ENCODE measurements at regions of chr10 and their contacts with region 1.

Region 1: DNA sequence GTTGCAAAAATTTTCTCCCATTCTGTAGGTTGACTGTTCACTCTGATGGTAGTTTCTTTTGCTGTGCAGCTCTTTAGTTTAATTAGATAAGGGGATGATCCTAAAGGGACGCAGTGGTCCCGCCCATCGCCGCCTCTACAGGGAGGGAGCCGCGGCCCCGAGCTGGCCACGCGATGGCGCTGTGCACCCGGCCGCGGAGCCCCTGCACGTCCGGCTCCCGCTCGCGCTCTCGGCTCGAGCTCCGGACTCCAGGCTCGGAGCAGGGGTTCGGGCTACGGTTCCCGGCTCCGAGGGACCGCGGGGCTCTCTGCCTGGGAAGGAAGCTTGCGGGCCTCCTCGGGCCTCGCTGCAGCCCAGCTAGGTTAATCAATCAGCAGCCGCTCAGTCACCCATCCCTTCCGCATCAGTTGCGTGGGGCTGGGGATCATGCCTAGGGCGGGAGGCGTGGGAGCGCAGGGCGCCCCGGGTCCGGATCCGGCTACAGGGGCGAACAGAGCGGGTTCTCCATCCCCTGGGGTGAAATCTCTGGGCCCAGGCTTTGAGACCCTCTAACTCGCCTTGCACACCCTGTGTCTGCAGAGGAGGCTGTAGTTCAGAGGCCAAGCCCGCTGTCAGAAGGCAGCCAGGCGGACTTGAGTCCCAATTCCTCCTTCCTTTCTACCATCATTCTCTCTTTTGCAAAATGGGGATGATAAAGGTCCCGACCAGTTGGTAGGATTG is 97.9 kb downstream of the WDR11 start:
- DNase-seq: no peak
- H3K4me3 ChIP-seq: peak overlapping the region; percentile 49
- CTCF ChIP-seq: peak; percentile 90

Region 2: GRCh38 chr10:121088524-121088923 is 139.5 kb after region 1 on chr10:
- CTCF ChIA-PET with region 1: no interaction called
- POLR2A ChIA-PET with region 1: no interaction called
- DNase-seq: no peak
- H3K4me3 ChIP-seq: no peak overlapping the region
- CTCF ChIP-seq: no peak

Region 3: GRCh38 chr10:121608469-121609190 is 659.6 kb after region 1 on chr10:
- CTCF ChIA-PET with region 1: interaction called, 17 read pairs
- POLR2A ChIA-PET with region 1: no interaction called
- DNase-seq: no peak
- H3K4me3 ChIP-seq: peak overlapping the region; percentile 40
- CTCF ChIP-seq: peak; percentile 63

Region 4: DNA sequence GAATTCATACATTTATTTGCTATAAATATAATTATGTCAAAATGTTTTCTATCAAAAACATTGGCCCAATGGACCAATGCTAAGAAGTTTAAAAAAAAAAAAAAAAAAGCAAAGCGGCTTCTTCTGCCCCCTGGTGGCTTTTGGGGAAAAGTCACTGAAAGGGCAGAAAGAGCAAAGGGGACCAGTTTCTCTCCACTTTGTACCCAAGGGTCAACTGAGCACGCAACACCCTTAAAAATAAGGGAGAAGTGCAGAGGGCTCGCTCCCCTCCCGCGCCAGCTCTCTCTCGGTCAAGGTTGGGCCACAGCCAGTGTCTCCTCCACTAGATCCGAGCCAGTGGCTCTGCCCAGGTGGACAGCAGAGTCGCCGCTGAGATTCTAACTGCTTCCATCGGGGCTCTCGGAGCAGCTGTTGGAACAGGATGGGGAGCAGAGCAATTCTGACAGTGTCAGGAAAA is 785.6 kb after region 1 on chr10:
- CTCF ChIA-PET with region 1: interaction called, 41 read pairs
- POLR2A ChIA-PET with region 1: no interaction called
- DNase-seq: no peak
- H3K4me3 ChIP-seq: no peak overlapping the region
- CTCF ChIP-seq: peak; percentile 47

Region 5: GRCh38 chr10:121880895-121881294 is 931.8 kb after region 1 on chr10:
- CTCF ChIA-PET with region 1: interaction called, 77 read pairs
- POLR2A ChIA-PET with region 1: no interaction called
- DNase-seq: no peak
- H3K4me3 ChIP-seq: no peak overlapping the region
- CTCF ChIP-seq: no peak

Region 6: GRCh38 chr10:121886997-121887622 is 938.1 kb after region 1 on chr10:
- CTCF ChIA-PET with region 1: interaction called, 77 read pairs
- POLR2A ChIA-PET with region 1: no interaction called
- DNase-seq: peak; percentile 24
- H3K4me3 ChIP-seq: no peak overlapping the region
- CTCF ChIP-seq: peak; percentile 88

Region 7: GRCh38 chr10:121900443-121901174 is 951.6 kb after region 1 on chr10:
- CTCF ChIA-PET with region 1: interaction called, 88 read pairs
- POLR2A ChIA-PET with region 1: no interaction called
- DNase-seq: peak; percentile 19
- H3K4me3 ChIP-seq: no peak overlapping the region
- CTCF ChIP-seq: peak; percentile 59

Measured in AG04449 (cell line).